Right ventricle myocardium superior (tissue), 1 donor: ENCODE measurements at regions of chr9 and their contacts with region 1.

Region 1: GRCh38 chr9:68560071-68560844 is 19.6 kb upstream of the TMEM252 start:
- DNase-seq: peak; percentile 75
- ATAC-seq: peak; percentile 64

Region 2: DNA sequence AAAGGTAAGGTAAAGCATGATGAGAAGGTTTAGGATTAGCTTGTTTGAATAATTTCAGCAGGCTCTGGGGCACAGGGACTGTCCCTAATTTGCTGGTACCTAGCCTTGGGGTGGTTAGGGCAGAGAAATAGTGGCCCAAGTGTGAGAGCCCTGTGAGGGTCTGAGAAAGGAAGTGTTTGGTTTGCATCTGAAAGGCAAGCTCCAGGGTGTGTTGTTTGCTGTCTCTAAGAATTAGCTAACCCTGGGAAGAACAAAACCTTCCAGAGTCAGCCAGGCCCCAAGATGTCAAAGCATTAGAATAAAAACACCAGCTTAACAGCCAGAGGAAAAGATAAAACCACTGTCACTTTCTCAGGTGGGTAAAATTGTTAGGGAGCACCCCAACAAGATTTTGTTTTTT is 50.6 kb before region 1 on chr9:
- intact Hi-C with region 1: loop called (anchors 5 kb)
- DNase-seq: no peak
- ATAC-seq: no peak

Region 3: DNA sequence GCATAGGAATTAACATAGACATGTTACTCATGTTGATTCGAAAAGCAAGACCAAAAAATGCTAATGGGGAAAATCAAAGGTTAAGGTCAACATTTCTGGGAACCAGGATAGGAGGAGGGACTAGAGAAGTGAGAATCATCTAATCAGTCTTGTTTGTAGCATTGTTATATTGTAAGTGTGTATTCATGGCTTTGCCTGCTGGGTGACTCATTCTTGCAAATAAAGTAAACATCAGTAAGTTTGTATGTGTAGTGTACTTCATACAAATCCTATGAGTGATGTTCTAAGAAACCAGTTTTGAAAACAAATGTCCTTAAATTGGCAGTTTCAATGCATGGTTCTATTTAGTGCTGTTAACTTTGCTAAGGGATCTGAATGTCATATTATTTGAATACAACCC is 59.4 kb after region 1 on chr9:
- intact Hi-C with region 1: loop called (anchors 10 kb)
- DNase-seq: no peak
- ATAC-seq: no peak